MCF 10A (cell line): ENCODE measurements at regions of chr6 and their contacts with region 1.

Region 1: DNA sequence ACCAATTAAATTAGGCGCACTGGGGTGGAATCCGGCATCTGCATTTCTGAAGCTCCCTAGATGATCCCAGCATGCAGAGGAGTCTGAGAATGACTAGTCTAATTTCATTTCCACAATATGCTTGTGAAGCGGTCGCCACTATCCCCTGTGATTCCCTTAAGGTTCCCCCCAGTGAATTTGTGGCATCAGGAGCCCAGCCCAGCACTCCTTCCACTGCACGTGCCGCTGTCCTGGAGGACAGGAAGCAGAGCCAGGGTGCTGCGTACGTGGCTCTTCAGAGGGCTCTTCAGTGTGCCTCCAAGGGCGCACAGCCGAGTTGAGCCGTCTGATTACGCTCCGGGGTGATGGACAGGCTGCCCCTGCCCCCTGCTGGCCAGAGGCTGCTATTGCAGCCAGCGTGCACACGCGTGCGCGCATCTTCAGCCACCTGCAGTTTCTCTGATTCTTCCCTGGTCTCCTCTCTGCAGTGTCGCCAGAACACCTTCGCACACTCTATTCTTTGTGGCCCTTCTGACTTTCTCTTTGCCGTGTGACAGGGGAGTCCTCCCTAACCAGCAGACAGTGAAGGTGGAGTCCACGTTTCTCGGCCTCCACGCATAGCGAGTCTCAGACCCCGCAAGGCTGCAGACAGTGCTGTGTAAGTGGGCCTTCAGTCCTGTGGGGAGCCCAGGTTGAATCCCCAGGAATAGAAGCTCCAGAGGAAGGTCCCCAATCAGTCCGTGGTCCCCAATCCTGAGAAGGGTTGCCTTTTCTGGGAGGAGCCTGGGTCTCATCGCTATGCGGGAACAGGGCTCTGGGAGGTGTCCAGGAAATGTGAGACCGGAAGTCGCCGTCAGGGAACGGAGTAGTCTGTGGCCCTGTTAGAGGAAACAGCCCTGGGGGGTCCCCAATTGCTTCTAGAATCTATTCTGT is 16.5 kb upstream of the NCR2 start:
- DNase-seq: peak; percentile 74
- H3K4me3 Mint-ChIP-seq: no peak overlapping the region
- H3K27ac Mint-ChIP-seq: no peak overlapping the region
- H3K4me1 Mint-ChIP-seq: peaks cover 21% of the 10 kb centered on the region
- H3K27me3 Mint-ChIP-seq: peaks cover 49% of the 10 kb centered on the region
- CTCF ChIP-seq: peak; percentile 98

Region 2: DNA sequence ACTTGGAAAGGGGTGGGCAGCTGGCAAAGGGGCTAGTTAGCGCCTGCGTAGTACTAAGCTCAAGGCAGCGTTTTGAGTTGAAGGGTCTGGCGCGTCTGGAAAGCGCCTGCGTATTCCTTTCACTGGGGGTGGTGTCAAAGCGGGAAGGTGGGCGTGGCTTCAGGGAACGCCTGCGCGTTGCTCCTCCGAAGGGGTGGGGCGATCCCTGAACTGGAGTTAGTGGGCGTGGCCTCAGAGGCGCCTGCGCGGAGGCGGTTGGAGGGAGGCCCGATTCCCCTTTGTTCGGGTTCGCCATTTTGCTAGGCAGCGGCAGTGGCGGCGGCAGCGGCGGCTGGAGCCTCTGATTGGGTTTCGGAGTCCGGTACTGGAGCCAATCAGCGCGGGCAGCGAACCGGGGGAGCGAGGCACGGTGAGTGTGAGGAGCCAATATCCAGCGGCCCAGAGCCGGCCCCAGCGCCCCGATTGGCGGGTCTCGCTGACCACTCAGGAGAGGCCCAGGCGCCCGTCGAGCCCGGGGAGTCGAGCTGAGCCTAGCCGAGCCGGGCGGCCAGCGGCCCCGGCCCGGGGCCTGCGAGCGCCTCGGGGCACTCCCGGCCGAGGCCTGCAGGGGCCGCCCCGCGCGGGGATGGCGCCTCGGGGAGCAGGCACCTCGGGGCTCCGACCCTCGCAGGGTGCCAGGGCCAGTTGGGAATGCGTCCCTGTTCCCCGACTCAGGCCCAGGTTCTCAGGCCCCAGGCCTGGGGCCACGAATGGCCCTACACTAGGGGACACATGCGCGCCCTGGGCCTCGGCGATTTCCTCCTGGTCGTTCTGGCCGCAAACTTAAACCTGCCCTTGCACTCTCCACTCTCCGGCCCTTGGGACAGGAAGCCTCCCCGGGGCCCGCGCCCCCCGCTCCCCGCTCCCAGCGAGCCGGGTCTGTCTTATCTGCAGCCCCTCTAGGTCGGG is 246.0 kb before region 1 on chr6 and contains the start of gene NFYA:
- CTCF ChIA-PET with region 1: interaction called, 19 read pairs
- POLR2A ChIA-PET with region 1: interaction called, 11 read pairs
- intact Hi-C with region 1: no loop called
- DNase-seq: peak; percentile 99
- H3K4me3 Mint-ChIP-seq: peak within 1 kb of the TSS; percentile 85
- H3K27ac Mint-ChIP-seq: peak within 1 kb of the TSS; percentile 95
- H3K4me1 Mint-ChIP-seq: peaks cover 33% of the 10 kb centered on the region
- H3K27me3 Mint-ChIP-seq: no peaks in the 10 kb centered on the region
- CTCF ChIP-seq: peak; percentile 23
- total RNA-seq, gene NFYA: 41.5 and 42.1 TPM in 2 replicates

Region 3: GRCh38 chr6:41092421-41093140 is 226.3 kb before region 1 on chr6:
- CTCF ChIA-PET with region 1: interaction called, 57 read pairs
- POLR2A ChIA-PET with region 1: no interaction called
- intact Hi-C with region 1: loop called (anchors 1 kb)
- DNase-seq: peak; percentile 37
- H3K4me3 Mint-ChIP-seq: no peak overlapping the region
- H3K27ac Mint-ChIP-seq: no peak overlapping the region
- H3K4me1 Mint-ChIP-seq: no peaks in the 10 kb centered on the region
- H3K27me3 Mint-ChIP-seq: no peaks in the 10 kb centered on the region
- CTCF ChIP-seq: peak; percentile 29

Region 4: GRCh38 chr6:41182069-41183034 is 136.6 kb before region 1 on chr6:
- CTCF ChIA-PET with region 1: interaction called, 3 read pairs
- POLR2A ChIA-PET with region 1: no interaction called
- intact Hi-C with region 1: loop called (anchors 2 kb)
- DNase-seq: peak; percentile 70
- H3K4me3 Mint-ChIP-seq: no peak overlapping the region
- H3K27ac Mint-ChIP-seq: no peak overlapping the region
- H3K4me1 Mint-ChIP-seq: no peaks in the 10 kb centered on the region
- H3K27me3 Mint-ChIP-seq: peaks cover 17% of the 10 kb centered on the region
- CTCF ChIP-seq: peak; percentile 56

Region 5: DNA sequence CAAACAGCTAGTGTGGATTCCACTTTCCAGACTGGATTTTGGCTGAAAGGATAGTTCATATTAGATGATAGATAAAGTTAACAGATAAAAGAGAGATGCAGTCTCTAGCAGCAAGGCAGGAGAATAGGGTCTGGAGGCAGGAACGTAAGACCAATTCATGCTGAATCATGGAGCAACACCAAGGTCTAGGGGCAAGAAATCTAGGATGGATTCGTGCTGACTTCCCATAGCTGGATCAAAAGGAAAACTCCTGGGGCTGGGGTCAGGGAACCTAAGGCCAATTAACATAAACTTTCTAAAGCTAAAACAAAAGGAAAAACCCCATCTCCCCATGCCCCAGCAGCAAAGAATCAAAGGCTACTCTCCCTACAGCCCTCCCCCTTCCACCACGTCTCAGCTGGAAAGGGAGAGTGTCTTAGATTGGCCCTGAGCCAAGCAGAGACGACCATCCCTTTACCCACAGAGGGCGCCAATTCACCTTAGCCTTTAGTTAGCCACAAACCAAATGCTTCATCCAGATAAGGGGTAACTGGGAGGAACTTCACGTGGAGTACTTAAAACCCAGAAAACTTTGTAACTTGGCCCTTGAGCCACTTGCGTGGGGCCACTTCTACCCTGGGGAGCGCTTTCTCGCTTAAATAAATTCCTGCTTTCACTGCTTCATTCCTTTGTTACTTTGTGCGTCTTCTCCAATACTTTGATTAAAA is 40.1 kb before region 1 on chr6:
- CTCF ChIA-PET with region 1: interaction called, 6 read pairs
- POLR2A ChIA-PET with region 1: no interaction called
- intact Hi-C with region 1: loop called (anchors 1 kb)
- DNase-seq: peak; percentile 79
- H3K4me3 Mint-ChIP-seq: no peak overlapping the region
- H3K27ac Mint-ChIP-seq: no peak overlapping the region
- H3K4me1 Mint-ChIP-seq: no peaks in the 10 kb centered on the region
- H3K27me3 Mint-ChIP-seq: no peaks in the 10 kb centered on the region
- CTCF ChIP-seq: peak; percentile 30

Region 6: DNA sequence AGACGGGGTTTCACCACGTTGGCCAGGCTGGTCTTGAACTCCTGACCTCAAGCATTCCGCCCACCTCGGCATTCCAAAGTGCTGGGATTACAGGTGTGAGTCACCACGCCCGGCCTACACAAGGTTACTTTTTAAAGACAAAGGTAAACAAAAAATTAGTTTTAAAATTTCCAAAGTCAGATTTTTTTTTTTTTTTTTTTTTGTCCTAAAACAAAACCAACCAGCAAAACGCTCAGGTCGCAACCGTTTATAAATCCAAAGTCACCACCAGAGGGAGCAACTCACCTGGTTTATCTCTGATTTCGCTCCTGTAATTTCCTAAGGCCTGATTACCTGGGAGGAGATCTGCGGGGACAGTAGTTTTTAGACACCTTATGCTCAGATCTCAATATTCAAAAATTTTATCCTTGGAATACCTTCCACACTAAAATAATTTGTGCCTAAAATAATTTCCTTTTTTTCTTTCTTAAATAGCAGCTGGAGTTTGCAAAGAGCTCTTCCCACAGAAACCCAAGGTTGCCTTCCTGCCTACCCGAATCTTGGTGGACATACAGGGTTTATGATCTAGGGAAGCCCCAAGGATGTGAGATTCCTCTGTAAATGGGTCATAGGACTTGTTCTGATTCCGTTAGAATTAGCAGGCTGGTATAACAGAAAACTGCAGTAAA is 12.6 kb before region 1 on chr6:
- CTCF ChIA-PET with region 1: interaction called, 113 read pairs
- POLR2A ChIA-PET with region 1: interaction called, 3 read pairs
- intact Hi-C with region 1: loop called (anchors 1 kb)
- DNase-seq: peak; percentile 72
- H3K4me3 Mint-ChIP-seq: no peak overlapping the region
- H3K27ac Mint-ChIP-seq: no peak overlapping the region
- H3K4me1 Mint-ChIP-seq: no peaks in the 10 kb centered on the region
- H3K27me3 Mint-ChIP-seq: peaks cover 62% of the 10 kb centered on the region
- CTCF ChIP-seq: peak; percentile 49